ENCODE measurements at regions of chr9 and their contacts with region 1.

Region 1: GRCh38 chr9:75027187-75028107 is 646 bp downstream of the CARNMT1 start:
- DNase-seq: peak; percentile 59
- H3K4me3 Mint-ChIP-seq: peak overlapping the region; percentile 98
- H3K27ac Mint-ChIP-seq: peak overlapping the region; percentile 97
- H3K4me1 Mint-ChIP-seq: peaks cover 44% of the 10 kb centered on the region
- H3K27me3 Mint-ChIP-seq: peaks cover 1% of the 10 kb centered on the region

Region 2: GRCh38 chr9:74773886-74774479 is 253.5 kb before region 1 on chr9:
- CTCF ChIA-PET with region 1: interaction called, 43 read pairs
- POLR2A ChIA-PET with region 1: no interaction called
- DNase-seq: peak; percentile 76
- H3K4me3 Mint-ChIP-seq: no peak overlapping the region
- H3K27ac Mint-ChIP-seq: no peak overlapping the region
- H3K4me1 Mint-ChIP-seq: peaks cover 16% of the 10 kb centered on the region
- H3K27me3 Mint-ChIP-seq: peaks cover 13% of the 10 kb centered on the region

Region 3: GRCh38 chr9:75001719-75002422 is 25.6 kb before region 1 on chr9:
- CTCF ChIA-PET with region 1: interaction called, 13 read pairs
- POLR2A ChIA-PET with region 1: no interaction called
- DNase-seq: no peak
- H3K4me3 Mint-ChIP-seq: no peak overlapping the region
- H3K27ac Mint-ChIP-seq: no peak overlapping the region
- H3K4me1 Mint-ChIP-seq: peaks cover 1% of the 10 kb centered on the region
- H3K27me3 Mint-ChIP-seq: no peaks in the 10 kb centered on the region

Region 4: DNA sequence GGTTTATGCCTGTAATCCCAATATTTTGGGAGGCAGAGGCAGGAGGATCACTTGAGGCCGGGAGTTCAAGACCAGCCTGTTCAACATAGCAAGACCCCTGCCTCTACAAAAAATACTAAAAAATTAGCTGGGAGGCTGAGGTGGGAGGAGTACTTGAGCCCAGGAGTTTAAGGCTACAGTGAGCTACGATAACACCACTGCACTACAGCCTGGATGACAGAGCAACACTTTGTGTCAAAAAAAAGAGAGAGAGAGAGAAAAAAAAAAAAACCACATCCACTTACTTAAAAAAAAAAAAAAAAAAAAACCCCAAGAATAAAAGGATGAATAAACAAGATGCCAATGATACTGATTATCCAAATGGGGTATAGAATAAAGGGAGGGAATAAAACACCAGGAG is 13.7 kb before region 1 on chr9:
- CTCF ChIA-PET with region 1: interaction called, 53 read pairs
- POLR2A ChIA-PET with region 1: interaction called, 24 read pairs
- DNase-seq: no peak
- H3K4me3 Mint-ChIP-seq: no peak overlapping the region
- H3K27ac Mint-ChIP-seq: no peak overlapping the region
- H3K4me1 Mint-ChIP-seq: peaks cover 33% of the 10 kb centered on the region
- H3K27me3 Mint-ChIP-seq: no peaks in the 10 kb centered on the region

Region 5: DNA sequence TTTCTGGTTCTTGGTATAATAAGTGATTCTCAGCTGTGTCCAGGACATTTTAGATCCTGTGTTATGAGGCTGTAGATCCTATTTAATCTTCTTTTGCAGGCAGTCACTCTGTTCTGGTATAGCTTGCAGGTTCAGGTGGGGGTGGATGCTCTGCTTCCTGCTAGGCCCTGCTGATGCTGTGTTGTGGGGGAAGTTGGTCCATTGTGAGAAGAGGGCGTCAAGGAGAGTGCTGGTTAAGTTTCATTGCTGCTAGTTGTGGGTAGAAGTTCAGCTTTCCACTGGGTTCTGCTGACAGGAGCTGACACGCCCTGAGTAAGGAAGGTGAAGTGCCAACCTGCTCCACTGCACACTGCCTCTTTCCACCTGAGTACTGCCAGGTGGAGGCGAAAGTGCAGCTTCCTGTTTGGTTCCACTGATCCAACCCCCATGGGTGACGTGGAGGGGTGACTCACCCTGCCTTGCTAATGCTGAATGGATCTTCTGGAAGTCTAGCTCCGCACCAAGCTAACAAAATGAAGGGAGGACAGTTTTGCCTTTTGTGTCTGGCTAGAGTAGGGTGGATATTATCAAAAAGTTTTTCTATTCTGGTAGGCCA is 44.2 kb after region 1 on chr9:
- CTCF ChIA-PET with region 1: interaction called, 14 read pairs
- POLR2A ChIA-PET with region 1: interaction called, 4 read pairs
- DNase-seq: peak; percentile 71
- H3K4me3 Mint-ChIP-seq: no peak overlapping the region
- H3K27ac Mint-ChIP-seq: peak overlapping the region; percentile 53
- H3K4me1 Mint-ChIP-seq: peaks cover 25% of the 10 kb centered on the region
- H3K27me3 Mint-ChIP-seq: no peaks in the 10 kb centered on the region

Region 6: DNA sequence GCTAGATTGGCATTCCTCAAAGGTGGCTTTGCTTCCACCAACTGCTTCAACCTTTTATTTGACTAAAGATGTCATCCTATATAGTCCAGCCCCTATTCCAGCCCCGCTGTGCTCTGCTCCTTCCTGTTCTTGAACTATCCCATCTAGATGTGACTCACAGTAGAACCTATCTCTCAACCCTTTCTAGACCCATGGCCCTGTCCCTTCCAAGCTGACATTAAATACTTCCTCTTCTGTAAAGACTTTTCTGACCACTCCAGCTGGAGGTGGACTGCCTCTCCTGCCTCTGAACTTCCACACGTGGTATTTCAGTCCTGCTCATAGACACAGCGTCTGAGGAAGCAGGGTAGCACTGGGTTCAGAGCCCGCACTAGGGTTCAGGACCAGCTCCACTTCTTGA is 93.2 kb after region 1 on chr9:
- CTCF ChIA-PET with region 1: no interaction called
- POLR2A ChIA-PET with region 1: no interaction called
- DNase-seq: no peak
- H3K4me3 Mint-ChIP-seq: no peak overlapping the region
- H3K27ac Mint-ChIP-seq: peak overlapping the region; percentile 22
- H3K4me1 Mint-ChIP-seq: peaks cover 62% of the 10 kb centered on the region
- H3K27me3 Mint-ChIP-seq: no peaks in the 10 kb centered on the region

Region 7: DNA sequence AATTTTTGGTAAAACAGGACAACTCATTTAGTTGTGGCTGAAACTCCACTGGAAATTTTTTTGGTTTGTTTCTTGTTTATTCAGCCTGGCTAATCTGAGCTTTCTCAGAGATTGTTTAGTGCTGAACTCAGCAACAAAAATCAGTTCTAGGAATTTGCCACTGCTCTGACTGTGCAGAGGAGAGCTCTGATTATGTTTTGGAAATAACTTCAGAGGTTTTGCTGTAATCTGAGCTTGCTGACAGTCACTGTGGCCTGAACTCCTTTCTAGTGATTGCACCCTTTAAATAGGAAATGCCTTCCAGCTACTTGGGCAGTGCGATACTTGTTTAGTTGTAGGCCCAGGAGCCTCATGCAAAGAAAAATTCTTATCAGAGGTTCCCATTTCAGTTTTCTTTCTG is 121.1 kb after region 1 on chr9:
- CTCF ChIA-PET with region 1: interaction called, 5 read pairs
- POLR2A ChIA-PET with region 1: interaction called, 15 read pairs
- DNase-seq: peak; percentile 56
- H3K4me3 Mint-ChIP-seq: peak overlapping the region; percentile 9
- H3K27ac Mint-ChIP-seq: peak overlapping the region; percentile 91
- H3K4me1 Mint-ChIP-seq: peaks cover 88% of the 10 kb centered on the region
- H3K27me3 Mint-ChIP-seq: no peaks in the 10 kb centered on the region